Caco-2 (cell line): ENCODE measurements at regions of chr3 and their contacts with region 1.

Region 1: GRCh38 chr3:60528651-60529050 is 722.6 kb downstream of the FHIT start:
- DNase-seq: no peak
- H3K4me3 ChIP-seq: no peak overlapping the region
- H3K4me3 Mint-ChIP-seq: no peak overlapping the region
- H3K27ac Mint-ChIP-seq: no peak overlapping the region
- H3K4me1 ChIP-seq: 0 out of 2 replicates have a peak, but pooled peaks cover 4% of the 10 kb centered on the region
- H3K4me1 Mint-ChIP-seq: peaks cover 7% of the 10 kb centered on the region
- H3K27me3 ChIP-seq: no peaks in the 10 kb centered on the region
- H3K27me3 Mint-ChIP-seq: no peaks in the 10 kb centered on the region
- CTCF ChIP-seq: no peak

Region 2: DNA sequence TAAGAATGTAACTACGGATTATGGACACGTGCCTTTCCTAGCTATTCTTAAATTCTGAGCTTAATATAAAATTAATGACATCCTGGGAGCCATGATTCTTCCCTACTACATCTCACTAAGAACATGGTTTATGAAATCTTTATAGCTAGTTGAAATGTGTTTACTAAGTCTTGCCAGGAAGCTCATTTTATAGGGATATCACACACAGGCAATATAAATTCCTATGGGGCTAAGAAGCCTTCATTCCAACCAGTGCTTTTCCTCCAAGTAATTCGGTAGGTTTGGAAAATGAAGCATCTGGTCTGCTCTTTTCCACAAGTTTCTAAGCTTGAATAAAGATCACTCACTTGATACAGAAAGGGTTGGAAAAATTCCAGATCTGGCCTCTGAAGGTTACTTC is 80.0 kb before region 1 on chr3:
- CTCF ChIA-PET with region 1: no interaction called
- POLR2A ChIA-PET with region 1: no interaction called
- intact Hi-C with region 1: no loop called
- DNase-seq: no peak
- H3K4me3 ChIP-seq: no peak overlapping the region
- H3K4me3 Mint-ChIP-seq: no peak overlapping the region
- H3K27ac Mint-ChIP-seq: no peak overlapping the region
- H3K4me1 ChIP-seq: 0 out of 2 replicates have a peak, but pooled peaks cover 6% of the 10 kb centered on the region
- H3K4me1 Mint-ChIP-seq: no peaks in the 10 kb centered on the region
- H3K27me3 ChIP-seq: no peaks in the 10 kb centered on the region
- H3K27me3 Mint-ChIP-seq: no peaks in the 10 kb centered on the region
- CTCF ChIP-seq: no peak

Region 3: DNA sequence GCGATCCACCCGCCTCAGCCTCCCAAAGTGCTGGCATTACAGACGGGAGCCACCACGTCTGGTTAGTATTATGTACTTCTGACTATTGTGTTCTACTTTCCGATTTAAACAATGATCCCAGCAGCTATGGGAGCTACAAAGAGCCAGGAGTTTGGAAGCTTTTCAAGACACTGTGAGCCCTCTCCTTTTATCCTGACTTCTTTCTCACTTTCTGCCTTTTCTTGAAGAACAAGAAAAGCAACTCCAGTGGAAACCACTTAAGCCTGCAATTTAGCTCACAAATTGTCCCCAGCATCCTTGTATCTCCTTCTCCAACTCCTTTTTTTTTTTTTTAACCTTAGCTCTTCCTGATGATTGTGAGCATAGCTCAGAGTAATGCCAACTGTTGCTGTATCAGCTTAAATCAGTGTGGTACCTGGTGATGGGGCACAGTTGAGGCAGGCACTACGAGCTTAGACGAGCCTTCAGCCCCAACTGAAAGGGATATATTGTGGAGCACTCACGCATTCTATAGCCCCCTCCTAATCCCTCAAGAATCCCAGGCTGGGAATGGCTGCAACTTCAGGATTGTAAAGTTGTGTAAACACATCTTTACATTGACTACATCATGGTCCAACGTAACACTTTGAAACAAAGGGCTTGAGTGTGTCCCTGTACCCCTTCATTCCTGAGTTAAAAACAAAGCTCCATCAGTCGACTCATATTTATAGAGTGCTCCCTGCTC is 45.6 kb after region 1 on chr3:
- CTCF ChIA-PET with region 1: interaction called, 15 read pairs
- POLR2A ChIA-PET with region 1: no interaction called
- intact Hi-C with region 1: no loop called
- DNase-seq: no peak
- H3K4me3 ChIP-seq: no peak overlapping the region
- H3K4me3 Mint-ChIP-seq: no peak overlapping the region
- H3K27ac Mint-ChIP-seq: no peak overlapping the region
- H3K4me1 ChIP-seq: peaks cover 8% of the 10 kb centered on the region
- H3K4me1 Mint-ChIP-seq: peaks cover 10% of the 10 kb centered on the region
- H3K27me3 ChIP-seq: no peaks in the 10 kb centered on the region
- H3K27me3 Mint-ChIP-seq: no peaks in the 10 kb centered on the region
- CTCF ChIP-seq: no peak